HepG2 (cell line): ENCODE measurements at regions of chr2 and their contacts with region 1.

Region 1: DNA sequence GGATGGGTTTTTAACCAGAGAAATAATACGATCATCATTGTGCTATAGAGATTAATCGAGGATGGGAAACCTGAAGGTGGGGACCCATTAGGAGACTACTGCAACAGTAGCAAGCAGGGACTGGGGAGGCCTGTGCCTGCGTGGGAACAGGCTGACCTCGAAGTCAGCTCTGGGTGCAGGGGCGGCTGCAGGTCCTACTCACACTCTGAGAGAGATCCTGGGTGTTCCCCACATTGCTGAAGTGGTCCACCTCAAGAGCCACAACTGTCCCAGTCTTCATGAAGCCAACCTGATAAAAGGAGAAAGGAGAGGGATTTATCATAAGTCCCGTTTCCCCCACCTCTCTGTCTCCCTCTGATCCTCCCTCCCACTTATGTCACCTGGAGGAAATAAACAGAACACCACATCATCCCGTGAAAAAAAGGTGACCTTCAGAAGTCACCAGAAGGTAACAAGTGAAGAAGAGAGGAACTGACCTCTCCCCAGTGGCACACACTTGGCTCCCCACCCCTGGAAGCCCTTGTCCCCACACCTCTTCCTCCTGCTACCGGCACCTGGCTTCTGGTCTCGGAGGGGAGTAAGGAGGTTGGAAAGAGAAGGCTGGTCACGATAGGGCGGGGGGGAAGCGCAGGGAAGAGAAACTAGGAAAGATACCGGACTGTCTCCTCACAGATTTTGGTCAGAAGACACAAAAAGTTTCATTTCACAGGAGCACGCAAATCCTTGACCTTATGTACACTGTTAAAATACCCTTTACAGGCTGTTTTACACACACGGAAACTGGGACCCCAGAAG is 50.4 kb downstream of the XDH start:
- DNase-seq: no peak
- ATAC-seq: no peak
- H3K4me3 ChIP-seq: no peak overlapping the region
- H3K27ac ChIP-seq: no peak overlapping the region
- H3K4me1 ChIP-seq: peaks cover 7% of the 10 kb centered on the region; the same call in 1 of the 2 replicates
- H3K27me3 ChIP-seq: peaks cover 0 to 18% of the 10 kb centered on the region in 2 experiments; a peak in 2 of 5 replicates
- CTCF ChIP-seq: no peak
- EP300 ChIP-seq: no peak
- POLR2A ChIP-seq: no peak
- RAD21 ChIP-seq: no peak

Region 2: DNA sequence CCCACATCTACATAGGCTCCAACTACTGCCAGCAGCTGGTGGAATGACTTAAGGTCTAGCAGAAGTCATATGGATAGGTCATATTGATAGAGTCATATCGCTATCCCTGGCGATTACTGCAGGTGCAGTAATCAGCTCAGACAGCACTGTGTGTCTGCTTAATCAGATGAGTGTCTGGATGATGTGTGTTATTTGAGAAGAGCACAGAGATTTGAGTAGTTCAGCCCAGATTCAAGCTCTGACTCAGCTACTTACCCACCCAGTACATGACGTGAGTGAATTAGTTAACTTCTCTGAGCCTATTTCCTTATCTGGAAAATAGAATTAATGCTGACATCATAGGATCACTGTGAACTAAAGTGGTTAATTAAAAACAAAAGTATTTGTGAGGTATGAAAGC is 51.3 kb before region 1 on chr2:
- CTCF ChIA-PET with region 1: no interaction called
- POLR2A ChIA-PET with region 1: no interaction called
- in situ Hi-C with region 1: no loop called
- intact Hi-C with region 1: no loop called
- DNase-seq: no peak
- ATAC-seq: no peak
- H3K4me3 ChIP-seq: no peak overlapping the region
- H3K27ac ChIP-seq: no peak overlapping the region
- H3K4me1 ChIP-seq: no peaks in the 10 kb centered on the region
- H3K27me3 ChIP-seq: peaks cover 0 to 4% of the 10 kb centered on the region in 2 experiments; a peak in 1 of 5 replicates
- CTCF ChIP-seq: no peak
- EP300 ChIP-seq: no peak
- POLR2A ChIP-seq: no peak
- RAD21 ChIP-seq: no peak

Region 3: DNA sequence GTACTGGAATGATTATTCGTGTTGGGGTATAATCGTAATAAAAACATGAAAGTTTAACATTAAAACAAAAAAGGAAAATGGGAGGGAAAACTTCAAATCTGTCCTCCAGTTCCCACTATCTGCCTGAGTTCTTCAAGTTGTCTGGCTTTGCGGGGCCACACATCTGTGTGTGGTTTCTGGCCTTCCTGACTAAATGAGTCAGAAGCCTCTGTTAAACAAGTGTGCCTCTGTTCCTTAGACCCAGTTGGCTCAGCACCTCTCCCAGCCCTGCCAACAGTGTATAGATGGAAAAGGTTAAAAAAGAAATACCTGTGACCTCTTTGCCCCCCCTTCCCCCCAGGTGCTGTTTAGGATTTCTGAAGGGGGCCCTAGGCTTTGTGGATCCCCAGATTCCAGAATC is 20.2 kb after region 1 on chr2:
- CTCF ChIA-PET with region 1: no interaction called
- POLR2A ChIA-PET with region 1: no interaction called
- in situ Hi-C with region 1: no loop called
- intact Hi-C with region 1: no loop called
- DNase-seq: no peak
- ATAC-seq: no peak
- H3K4me3 ChIP-seq: no peak overlapping the region
- H3K27ac ChIP-seq: no peak overlapping the region
- H3K4me1 ChIP-seq: no peaks in the 10 kb centered on the region
- H3K27me3 ChIP-seq: peaks cover 0 to 17% of the 10 kb centered on the region in 2 experiments; a peak in 1 of 5 replicates
- CTCF ChIP-seq: no peak
- EP300 ChIP-seq: no peak
- POLR2A ChIP-seq: no peak
- RAD21 ChIP-seq: no peak

Region 4: DNA sequence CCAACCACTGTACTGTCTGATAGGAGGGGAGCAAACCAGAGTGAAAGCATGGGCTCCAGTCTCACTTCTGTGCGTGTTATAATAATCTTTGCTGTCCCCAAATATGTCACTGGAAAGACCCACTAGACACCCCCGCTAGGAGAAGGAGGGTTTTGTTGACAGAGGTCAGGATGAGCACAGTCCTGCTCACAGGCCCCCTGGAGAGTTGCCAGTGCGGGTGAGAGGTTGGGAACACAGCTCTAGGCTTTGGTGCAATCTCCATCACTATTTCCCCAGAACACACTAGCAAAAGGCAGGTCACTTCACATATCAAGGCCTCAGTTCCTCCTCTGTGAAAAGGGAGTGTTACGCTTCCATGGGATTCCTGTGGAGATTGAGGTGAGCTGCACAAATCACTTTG is 40.7 kb after region 1 on chr2:
- CTCF ChIA-PET with region 1: no interaction called
- POLR2A ChIA-PET with region 1: no interaction called
- in situ Hi-C with region 1: no loop called
- intact Hi-C with region 1: loop called (anchors 1 kb)
- DNase-seq: no peak
- ATAC-seq: no peak
- H3K4me3 ChIP-seq: no peak overlapping the region
- H3K27ac ChIP-seq: no peak overlapping the region
- H3K4me1 ChIP-seq: no peaks in the 10 kb centered on the region
- H3K27me3 ChIP-seq: peaks cover 0 to 3% of the 10 kb centered on the region in 2 experiments; a peak in 1 of 5 replicates
- CTCF ChIP-seq: no peak
- EP300 ChIP-seq: no peak
- POLR2A ChIP-seq: no peak
- RAD21 ChIP-seq: no peak